ENCODE measurements at regions of chr6 and their contacts with region 1.

Region 1: GRCh38 chr6:118372413-118372812 is 175.7 kb upstream of the PLN start:
- DNase-seq: no peak
- ATAC-seq: peak; percentile 91

Region 2: GRCh38 chr6:118295336-118295735 is 77.1 kb before region 1 on chr6:
- intact Hi-C with region 1: loop called (anchors 1 kb)
- DNase-seq: no peak
- ATAC-seq: peak; percentile 86

Region 3: DNA sequence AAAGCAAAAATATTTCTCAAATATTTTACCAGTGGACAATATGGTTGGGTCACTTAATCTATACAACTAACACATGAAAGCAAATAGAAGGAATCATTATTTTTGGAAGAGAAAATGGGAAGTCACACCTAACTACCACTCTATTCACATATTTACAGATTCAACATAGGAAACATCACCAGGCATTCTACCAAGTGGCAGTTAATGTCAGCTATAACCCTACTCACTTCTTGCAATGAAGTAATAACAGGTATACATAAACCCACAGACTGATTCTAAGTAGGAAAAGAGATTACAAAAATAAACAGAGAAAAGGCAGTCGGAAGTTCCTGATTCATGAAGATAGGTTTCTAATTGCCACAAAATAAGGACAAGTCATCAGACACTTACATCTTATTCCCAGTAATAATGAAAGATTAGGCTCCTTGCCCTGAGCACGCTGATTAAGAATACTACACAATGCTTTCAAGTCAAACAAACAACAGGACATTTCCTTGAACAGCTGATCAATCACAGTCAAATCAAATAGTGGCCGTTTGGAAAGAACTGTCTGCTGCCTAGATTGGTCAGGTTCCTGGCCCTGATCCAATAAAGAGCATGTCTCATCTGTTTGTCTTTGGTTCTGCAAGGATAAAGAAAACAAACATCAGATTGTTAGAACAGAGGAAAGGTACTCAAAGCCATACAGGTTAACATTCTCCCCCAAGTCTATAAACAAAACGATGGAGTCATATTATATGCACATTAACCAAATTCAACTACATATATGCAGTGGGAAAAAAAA is 96.5 kb after region 1 on chr6:
- intact Hi-C with region 1: loop called (anchors 5 kb)
- DNase-seq: no peak
- ATAC-seq: no peak

Region 4: GRCh38 chr6:118542184-118542952 is 170.0 kb after region 1 on chr6:
- intact Hi-C with region 1: loop called (anchors 5 kb)
- DNase-seq: no peak
- ATAC-seq: no peak

Measured in Right ventricle myocardium inferior (tissue), 1 donor.